Naive thymus-derived CD4-positive, alpha-beta T cell (primary cell): ENCODE measurements at regions of chr2 and their contacts with region 1.

Region 1: DNA sequence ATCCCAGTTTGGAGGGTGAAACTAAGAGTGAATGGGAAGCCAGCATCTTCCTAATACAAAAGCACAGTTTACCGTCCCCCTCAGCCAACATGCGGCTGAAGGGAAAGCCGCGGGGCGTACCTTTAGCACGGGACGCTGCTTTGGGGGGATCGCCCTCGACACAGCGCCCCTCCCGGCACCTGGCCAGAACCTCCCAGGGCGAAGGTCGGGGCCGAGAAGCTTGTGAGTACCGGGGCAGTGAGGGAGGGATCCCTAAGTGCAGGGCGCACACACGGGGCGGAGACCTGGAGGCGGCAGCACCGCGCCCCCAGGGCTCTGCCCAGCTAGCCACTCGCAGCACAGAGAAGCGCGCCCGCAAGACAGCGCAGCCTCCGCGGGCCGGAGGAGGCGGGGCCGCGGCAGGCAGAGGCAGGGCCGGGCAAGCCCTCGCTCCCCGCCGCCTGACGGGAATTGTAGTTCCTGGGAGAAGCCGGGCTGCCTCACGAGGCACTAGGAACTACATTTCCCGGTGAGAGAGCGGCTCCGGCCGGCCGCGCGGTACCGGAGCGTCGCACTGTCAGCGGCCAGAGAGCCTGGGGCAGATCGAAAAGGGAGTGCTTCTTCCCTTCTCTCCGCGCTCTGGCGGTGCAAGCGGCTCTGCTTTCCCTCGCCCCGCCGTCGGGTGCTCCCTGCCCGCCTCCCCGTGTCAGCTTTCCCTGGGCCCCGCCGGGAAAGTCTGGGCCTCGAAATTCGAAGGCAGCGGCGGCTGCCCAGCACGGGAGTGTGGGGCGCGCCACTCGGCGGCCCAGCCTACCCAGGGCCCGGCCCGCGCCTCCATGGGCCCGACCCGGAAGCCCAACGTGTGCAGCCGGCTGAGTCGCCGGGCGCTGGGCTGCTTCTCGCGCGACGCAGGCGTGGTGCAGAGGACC is at the starts of genes DCAF17 and METTL8:
- DNase-seq: peak; percentile 84 to 93 (median 91)
- ATAC-seq: peak; percentile 95
- H3K4me3 ChIP-seq: peak within 1 kb of the TSS; percentile 87
- H3K4me3 Mint-ChIP-seq: peak within 1 kb of the TSS; percentile 82 to 97 (median 90)
- H3K27ac ChIP-seq: peak within 1 kb of the TSS; percentile 92
- H3K27ac Mint-ChIP-seq: peak within 1 kb of the TSS; percentile 84 to 98 (median 95)
- H3K4me1 ChIP-seq: peaks cover 15 to 28% of the 10 kb centered on the region in 2 donors
- H3K4me1 Mint-ChIP-seq: peaks cover 30 to 56% (median 51%) of the 10 kb centered on the region in 7 donors
- H3K27me3 ChIP-seq: no peaks in the 10 kb centered on the region
- H3K27me3 Mint-ChIP-seq: no peaks in the 10 kb centered on the region
- total RNA-seq, gene DCAF17: 19.0 to 40.3 (median 23.7) TPM
- total RNA-seq, gene METTL8: 11.8 to 21.6 (median 14.8) TPM

Region 2: DNA sequence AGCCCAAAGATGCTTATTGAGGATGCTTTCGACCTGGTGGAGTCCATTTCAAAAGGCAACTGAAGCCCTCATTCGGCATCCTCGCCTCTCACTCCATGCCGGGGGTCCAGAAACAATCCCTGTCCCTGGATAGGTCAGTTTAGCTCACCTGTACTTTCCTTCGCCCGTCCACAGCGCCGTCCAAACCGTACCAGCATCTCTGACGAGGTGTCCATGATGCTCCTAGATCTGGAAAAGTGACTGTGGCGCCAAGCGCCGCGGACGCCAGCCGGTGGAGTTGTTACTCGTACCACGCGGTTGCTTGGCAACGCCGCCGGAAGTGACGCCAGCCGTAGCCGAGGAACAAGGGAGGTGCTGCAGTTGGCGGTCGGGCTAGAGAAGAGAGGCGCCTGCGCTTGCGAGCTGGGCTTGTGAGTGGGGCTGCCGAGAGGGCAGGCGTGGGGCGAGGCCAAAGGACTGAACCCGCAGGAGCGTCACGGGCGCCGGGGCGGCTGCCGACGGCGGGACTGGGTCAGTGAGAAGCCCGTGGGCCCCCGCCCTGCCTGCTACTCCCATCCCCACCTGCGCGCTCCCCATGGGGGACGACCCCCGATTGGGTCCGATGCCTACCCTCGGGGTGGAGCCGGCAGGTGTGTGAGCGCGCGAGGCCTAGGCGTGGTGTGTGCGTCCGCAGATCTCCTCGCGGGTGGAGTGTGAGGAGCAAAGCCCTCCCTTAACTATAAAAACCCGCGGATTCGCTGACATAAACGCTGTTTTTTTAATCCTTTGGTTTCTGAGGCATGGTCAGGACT is 1739.7 kb before region 1 on chr2 and contains the starts of genes CFAP210 and PHOSPHO2:
- CTCF ChIA-PET with region 1: no interaction called
- POLR2A ChIA-PET with region 1: no interaction called
- intact Hi-C with region 1: loop called in 1 of 2 experiments (anchors 1 kb)
- DNase-seq: peak; percentile 96 to 99 (median 98)
- ATAC-seq: peak; percentile 96
- H3K4me3 ChIP-seq: peak within 1 kb of the TSS; percentile 61
- H3K4me3 Mint-ChIP-seq: peak within 1 kb of the TSS; percentile 86 to 98 (median 90)
- H3K27ac ChIP-seq: peak within 1 kb of the TSS; percentile 87
- H3K27ac Mint-ChIP-seq: peak within 1 kb of the TSS; percentile 88 to 100 (median 99)
- H3K4me1 ChIP-seq: peaks cover 5 to 6% of the 10 kb centered on the region in 2 donors
- H3K4me1 Mint-ChIP-seq: peaks cover 5 to 22% (median 18%) of the 10 kb centered on the region in 7 donors
- H3K27me3 ChIP-seq: no peaks in the 10 kb centered on the region
- H3K27me3 Mint-ChIP-seq: peaks cover 0 to 30% (median 10%) of the 10 kb centered on the region in 5 donors
- total RNA-seq, gene CFAP210: 1.0 to 3.6 TPM in 2 of 5 experiments, not detected in the others
- total RNA-seq, gene PHOSPHO2: 4.5 to 9.5 (median 7.5) TPM

Region 3: GRCh38 chr2:171086352-171087290 is 347.4 kb before region 1 on chr2:
- CTCF ChIA-PET with region 1: interaction called, 3 read pairs
- POLR2A ChIA-PET with region 1: interaction called, 3 read pairs
- intact Hi-C with region 1: loop called (anchors 1 to 5 kb)
- DNase-seq: peak in 8 of 9 donors; percentile 34 to 76 (median 71)
- ATAC-seq: peak; percentile 82
- H3K4me3 ChIP-seq: peak overlapping the region; percentile 34
- H3K4me3 Mint-ChIP-seq: peak overlapping the region; percentile 69 to 92 (median 82)
- H3K27ac ChIP-seq: peak overlapping the region; percentile 71
- H3K27ac Mint-ChIP-seq: peak overlapping the region; percentile 86 to 99 (median 95)
- H3K4me1 ChIP-seq: peaks cover 7 to 68% of the 10 kb centered on the region in 2 donors
- H3K4me1 Mint-ChIP-seq: peaks cover 45 to 86% (median 76%) of the 10 kb centered on the region in 7 donors
- H3K27me3 ChIP-seq: no peaks in the 10 kb centered on the region
- H3K27me3 Mint-ChIP-seq: no peaks in the 10 kb centered on the region

Region 4: GRCh38 chr2:171416009-171416926 is 17.7 kb before region 1 on chr2:
- CTCF ChIA-PET with region 1: interaction called, 3 read pairs
- POLR2A ChIA-PET with region 1: interaction called, 3 read pairs
- intact Hi-C with region 1: loop called (anchors 1 kb)
- DNase-seq: peak; percentile 29 to 82 (median 75)
- ATAC-seq: peak; percentile 99
- H3K4me3 ChIP-seq: no peak overlapping the region
- H3K4me3 Mint-ChIP-seq: no peak overlapping the region
- H3K27ac ChIP-seq: no peak overlapping the region
- H3K27ac Mint-ChIP-seq: peak overlapping the region; percentile 4 to 74 (median 55)
- H3K4me1 ChIP-seq: no peaks in the 10 kb centered on the region
- H3K4me1 Mint-ChIP-seq: peaks cover 6 to 22% (median 7%) of the 10 kb centered on the region in 7 donors
- H3K27me3 ChIP-seq: no peaks in the 10 kb centered on the region
- H3K27me3 Mint-ChIP-seq: no peaks in the 10 kb centered on the region

Region 5: DNA sequence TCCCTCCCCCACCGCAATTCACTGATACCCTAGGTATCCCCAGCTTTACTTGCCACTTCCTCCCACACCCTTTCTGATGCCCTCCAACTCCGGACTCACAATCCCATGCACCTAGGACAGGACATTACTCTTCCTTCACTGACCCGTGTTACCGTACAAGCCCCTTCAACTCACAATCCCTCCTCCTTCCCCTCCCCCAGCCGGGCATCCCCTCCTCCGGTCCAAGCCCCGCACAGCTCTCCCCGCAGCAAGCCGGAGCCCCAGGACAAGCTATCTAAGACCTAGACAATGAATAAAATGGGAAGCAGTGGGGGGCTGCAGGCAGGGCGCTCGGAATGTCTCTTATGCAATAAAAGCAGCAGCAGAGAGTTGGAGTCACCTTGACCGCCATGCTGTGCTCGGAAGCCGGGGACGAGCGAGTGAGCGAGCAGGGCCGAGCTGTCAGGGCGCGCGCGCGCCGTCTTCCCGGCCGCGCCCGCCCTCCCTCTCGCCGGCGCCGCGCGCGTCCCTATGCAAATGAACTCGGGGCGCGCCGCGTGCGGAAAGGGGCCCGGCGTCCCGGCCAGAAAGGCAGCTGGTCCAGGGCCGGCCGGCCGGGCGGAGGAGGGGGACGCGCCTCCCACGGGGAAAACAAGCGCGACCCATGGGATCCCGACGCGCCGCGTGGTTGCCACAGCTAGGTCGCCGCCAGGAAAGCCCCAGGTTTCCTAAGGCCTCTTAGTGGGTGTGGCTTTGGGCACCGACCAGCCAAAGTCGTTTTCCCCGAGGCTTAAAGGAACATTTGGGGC is 460.0 kb after region 1 on chr2 and contains the start of gene SLC25A12:
- CTCF ChIA-PET with region 1: no interaction called
- POLR2A ChIA-PET with region 1: no interaction called
- intact Hi-C with region 1: loop called in 1 of 2 experiments (anchors 1 kb)
- DNase-seq: peak; percentile 53 to 79 (median 65)
- ATAC-seq: peak; percentile 96
- H3K4me3 ChIP-seq: peak within 1 kb of the TSS; percentile 93
- H3K4me3 Mint-ChIP-seq: peak within 1 kb of the TSS; percentile 93 to 98 (median 96)
- H3K27ac ChIP-seq: peak within 1 kb of the TSS; percentile 83
- H3K27ac Mint-ChIP-seq: peak within 1 kb of the TSS; percentile 66 to 94 (median 89)
- H3K4me1 ChIP-seq: peaks cover 11 to 17% of the 10 kb centered on the region in 2 donors
- H3K4me1 Mint-ChIP-seq: peaks cover 31 to 61% (median 52%) of the 10 kb centered on the region in 7 donors
- H3K27me3 ChIP-seq: no peaks in the 10 kb centered on the region
- H3K27me3 Mint-ChIP-seq: peaks cover 0 to 6% (median 0%) of the 10 kb centered on the region in 5 donors
- total RNA-seq, gene SLC25A12: 12.7 to 33.6 (median 14.0) TPM